CD14-positive monocyte (primary cell): ENCODE measurements at regions of chr18 and their contacts with region 1.

Region 1: GRCh38 chr18:50356036-50356945 is 18.6 kb upstream of the SKA1 start:
- DNase-seq: peak; percentile 71 to 80 (median 76)
- H3K4me3 ChIP-seq: no peak overlapping the region
- H3K4me3 Mint-ChIP-seq: peak overlapping the region; percentile 28 to 59
- H3K27ac ChIP-seq: peak overlapping the region in 1 of 2 donors; percentile 77
- H3K27ac Mint-ChIP-seq: peak overlapping the region; percentile 85 to 92 (median 91)
- H3K4me1 ChIP-seq: peaks cover 14 to 18% of the 10 kb centered on the region in 2 donors
- H3K4me1 Mint-ChIP-seq: peaks cover 21% of the 10 kb centered on the region
- H3K27me3 ChIP-seq: peaks cover 0 to 3% of the 10 kb centered on the region in 2 donors
- H3K27me3 Mint-ChIP-seq: peaks cover 7 to 10% (median 8%) of the 10 kb centered on the region in 3 donors
- CTCF ChIP-seq: no peak

Region 2: DNA sequence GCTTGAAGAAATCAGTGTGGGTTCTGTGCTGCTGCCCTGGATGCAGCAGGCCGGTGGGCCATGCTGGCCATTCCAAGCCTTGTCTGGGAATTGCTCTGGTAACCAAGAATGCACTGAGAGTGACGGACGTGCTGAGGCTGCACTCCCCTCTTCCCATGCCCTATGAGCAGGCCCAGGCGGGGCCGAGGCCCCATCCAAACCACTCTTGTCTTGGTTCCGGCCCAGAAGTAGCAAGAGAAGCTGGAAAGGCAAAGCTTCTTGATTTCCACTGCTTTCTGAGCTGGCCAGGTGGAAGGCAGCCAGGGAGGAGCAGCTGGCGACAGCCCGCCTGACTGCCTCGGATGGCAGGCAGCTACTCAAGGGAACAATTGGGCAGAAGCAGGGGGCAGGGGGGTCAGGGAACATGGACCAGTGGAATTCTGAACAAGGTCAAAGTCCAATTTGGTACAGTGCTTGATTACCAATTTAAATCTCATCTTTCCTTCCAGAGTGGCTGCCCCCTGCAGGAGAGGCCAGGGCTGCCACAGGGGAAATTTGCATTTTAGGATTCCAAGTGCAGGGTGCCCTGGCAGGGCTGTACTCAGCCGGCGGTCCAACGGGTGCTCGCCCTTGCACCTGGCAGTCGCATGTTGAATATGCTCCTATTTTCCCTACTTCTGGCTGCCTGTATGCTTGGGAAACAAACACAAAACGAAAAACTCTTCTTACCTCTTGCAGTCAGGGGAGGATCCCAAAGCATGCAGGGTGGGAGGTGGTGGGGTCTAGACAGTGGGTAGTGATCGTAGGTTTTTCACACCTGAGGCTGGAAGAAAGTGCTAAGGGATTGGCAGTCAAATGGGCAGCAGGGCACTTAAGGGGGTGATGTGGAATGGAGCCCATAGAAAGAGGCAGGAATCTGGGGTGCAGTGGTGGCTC is 727.2 kb before region 1 on chr18:
- intact Hi-C with region 1: no loop called
- DNase-seq: no peak
- H3K4me3 ChIP-seq: no peak overlapping the region
- H3K4me3 Mint-ChIP-seq: no peak overlapping the region
- H3K27ac ChIP-seq: no peak overlapping the region
- H3K27ac Mint-ChIP-seq: peak overlapping the region in 1 of 7 donors; percentile 68
- H3K4me1 ChIP-seq: no peaks in the 10 kb centered on the region
- H3K4me1 Mint-ChIP-seq: peaks cover 6% of the 10 kb centered on the region
- H3K27me3 ChIP-seq: no peaks in the 10 kb centered on the region
- H3K27me3 Mint-ChIP-seq: peaks cover 4 to 5% (median 4%) of the 10 kb centered on the region in 3 donors
- CTCF ChIP-seq: no peak

Region 3: GRCh38 chr18:50009773-50010335 is 346.4 kb before region 1 on chr18:
- intact Hi-C with region 1: loop called in 1 of 2 experiments (anchors 5 kb)
- DNase-seq: peak; percentile 5 to 33 (median 12)
- H3K4me3 ChIP-seq: no peak overlapping the region
- H3K4me3 Mint-ChIP-seq: no peak overlapping the region
- H3K27ac ChIP-seq: no peak overlapping the region
- H3K27ac Mint-ChIP-seq: no peak overlapping the region
- H3K4me1 ChIP-seq: no peaks in the 10 kb centered on the region
- H3K4me1 Mint-ChIP-seq: no peaks in the 10 kb centered on the region
- H3K27me3 ChIP-seq: no peaks in the 10 kb centered on the region
- H3K27me3 Mint-ChIP-seq: peaks cover under 1 to 2% (median under 1%) of the 10 kb centered on the region in 3 donors
- CTCF ChIP-seq: peak; percentile 32

Region 4: DNA sequence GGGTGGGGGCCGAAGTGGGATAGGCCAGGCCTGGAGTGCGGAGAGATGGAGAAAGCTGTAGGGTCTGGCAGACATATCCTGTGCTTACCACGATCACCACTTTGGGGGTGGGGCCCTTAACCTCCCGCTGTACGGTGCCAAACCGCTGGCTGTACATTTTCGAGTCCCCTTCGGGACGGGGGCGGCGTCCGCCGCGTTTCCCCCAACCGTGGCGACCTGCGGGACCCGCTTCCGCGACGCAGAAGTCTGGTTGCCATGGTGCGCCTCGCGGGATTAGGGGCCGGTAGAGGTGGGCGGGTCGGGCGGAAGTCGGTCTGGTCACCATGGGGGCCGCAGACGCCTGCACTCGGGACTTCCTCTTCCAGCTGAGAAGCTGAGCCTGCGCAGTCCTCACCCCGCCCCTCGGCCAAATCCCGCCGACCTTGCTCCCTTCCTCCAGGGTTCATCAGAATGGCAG is 90.0 kb before region 1 on chr18 and contains the start of gene CFAP53:
- intact Hi-C with region 1: loop called in 1 of 2 experiments (anchors 5 kb)
- DNase-seq: peak; percentile 82 to 90 (median 87)
- H3K4me3 ChIP-seq: peak within 1 kb of the TSS; percentile 65 to 92 (median 73)
- H3K4me3 Mint-ChIP-seq: peak within 1 kb of the TSS; percentile 85 to 94
- H3K27ac ChIP-seq: peak within 1 kb of the TSS in 1 of 2 donors; percentile 59
- H3K27ac Mint-ChIP-seq: peak within 1 kb of the TSS in 6 of 7 donors; percentile 50 to 84 (median 80)
- H3K4me1 ChIP-seq: peaks cover 18 to 29% of the 10 kb centered on the region in 2 donors
- H3K4me1 Mint-ChIP-seq: peaks cover 23% of the 10 kb centered on the region
- H3K27me3 ChIP-seq: peaks cover 0 to 2% of the 10 kb centered on the region in 2 donors
- H3K27me3 Mint-ChIP-seq: peaks cover 1 to 10% (median 7%) of the 10 kb centered on the region in 3 donors
- CTCF ChIP-seq: no peak
- polyA plus RNA-seq, gene CFAP53: 0.08 to 0.14 TPM in 2 of 3 donors, not detected in the other

Region 5: DNA sequence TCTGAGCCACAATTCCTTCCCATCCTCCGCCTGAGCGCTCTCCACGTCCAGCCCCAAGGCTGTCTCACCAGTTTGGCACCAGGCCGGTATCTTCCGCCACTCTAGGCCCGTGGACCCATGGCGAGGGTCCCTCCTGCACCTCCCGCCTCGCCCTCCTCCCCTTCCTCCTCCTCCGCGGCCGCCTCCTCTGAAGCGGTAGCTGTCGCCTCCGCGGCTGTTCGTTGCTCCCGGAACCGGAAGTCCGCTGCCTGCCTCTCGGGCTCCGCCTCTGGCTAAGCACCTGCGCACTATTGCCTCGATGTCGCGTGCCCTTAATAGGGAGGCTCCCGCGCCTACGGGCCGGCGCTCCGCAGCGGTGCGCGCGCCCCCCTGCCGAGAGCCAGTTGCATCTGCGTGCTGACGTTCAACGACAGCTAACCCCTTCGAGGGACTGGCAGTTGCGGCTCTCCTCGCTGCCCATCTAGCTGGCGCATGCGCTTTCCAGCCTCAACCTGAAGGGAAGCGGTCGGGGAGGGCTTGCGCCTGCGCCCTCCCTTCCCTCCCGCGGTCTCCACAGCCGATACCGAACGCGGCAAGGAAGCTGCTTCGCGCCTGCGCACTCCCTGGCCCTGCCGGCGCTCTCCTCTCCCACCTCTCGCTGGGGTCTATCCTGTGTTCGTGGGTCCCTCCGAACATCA is 74.9 kb before region 1 on chr18 and contains the start of gene MBD1:
- intact Hi-C with region 1: loop called in 1 of 2 experiments (anchors 5 kb)
- DNase-seq: peak; percentile 97 to 98 (median 98)
- H3K4me3 ChIP-seq: peak within 1 kb of the TSS; percentile 78 to 92 (median 86)
- H3K4me3 Mint-ChIP-seq: peak within 1 kb of the TSS; percentile 93 to 98
- H3K27ac ChIP-seq: peak within 1 kb of the TSS; percentile 86 to 87
- H3K27ac Mint-ChIP-seq: peak within 1 kb of the TSS; percentile 93 to 98 (median 96)
- H3K4me1 ChIP-seq: peaks cover 26 to 55% of the 10 kb centered on the region in 2 donors
- H3K4me1 Mint-ChIP-seq: peaks cover 49% of the 10 kb centered on the region
- H3K27me3 ChIP-seq: no peaks in the 10 kb centered on the region
- H3K27me3 Mint-ChIP-seq: peaks cover 0 to 2% (median 0%) of the 10 kb centered on the region in 3 donors
- CTCF ChIP-seq: peak; percentile 21
- polyA plus RNA-seq, gene MBD1: 13.2 to 88.6 (median 17.4) TPM

Region 6: GRCh38 chr18:50297621-50298442 is 58.5 kb before region 1 on chr18:
- intact Hi-C with region 1: loop called in 1 of 2 experiments (anchors 5 kb)
- DNase-seq: peak; percentile 84 to 90 (median 90)
- H3K4me3 ChIP-seq: peak overlapping the region; percentile 8 to 70 (median 34)
- H3K4me3 Mint-ChIP-seq: peak overlapping the region; percentile 79 to 94
- H3K27ac ChIP-seq: peak overlapping the region in 1 of 2 donors; percentile 42
- H3K27ac Mint-ChIP-seq: peak overlapping the region in 6 of 7 donors; percentile 50 to 89 (median 86)
- H3K4me1 ChIP-seq: peaks cover 14 to 23% of the 10 kb centered on the region in 2 donors
- H3K4me1 Mint-ChIP-seq: peaks cover 18% of the 10 kb centered on the region
- H3K27me3 ChIP-seq: peaks cover 17 to 36% of the 10 kb centered on the region in 2 donors
- H3K27me3 Mint-ChIP-seq: peaks cover 20 to 33% (median 28%) of the 10 kb centered on the region in 3 donors
- CTCF ChIP-seq: no peak